ENCODE measurements at regions of chr10 and their contacts with region 1.

Region 1: DNA sequence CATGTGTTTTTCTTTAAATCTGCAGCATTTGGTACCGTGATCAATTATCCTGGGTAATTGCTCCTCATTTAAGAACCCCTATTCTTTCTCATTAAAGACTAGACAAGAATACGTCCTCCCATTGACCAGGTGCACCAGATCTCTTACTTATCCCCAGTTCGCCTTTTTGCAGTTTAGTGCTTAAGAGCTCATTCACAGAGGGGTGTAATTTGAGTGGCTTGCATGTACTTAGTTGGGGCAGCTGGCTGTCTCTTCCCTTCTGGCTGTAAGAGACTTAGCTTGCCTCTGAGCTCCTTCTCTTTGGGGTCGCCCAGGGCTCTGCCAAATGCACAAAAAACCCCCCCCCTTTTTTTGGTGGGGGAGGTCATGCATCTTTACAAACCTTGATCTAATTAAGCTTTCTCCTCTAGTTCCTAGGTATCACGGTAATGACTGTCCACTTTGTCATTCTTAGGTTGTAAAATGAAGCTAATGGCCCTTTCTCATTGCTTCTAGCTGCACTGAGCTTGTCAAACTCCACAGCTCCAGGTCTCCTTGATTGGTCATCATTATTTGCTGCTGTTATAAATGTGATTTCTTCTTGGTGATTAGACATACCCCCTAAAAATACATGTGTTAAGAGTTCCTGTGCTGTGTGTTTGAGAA is 26.3 kb downstream of the GAD2 start:
- DNase-seq: no peak
- H3K4me3 ChIP-seq: no peak overlapping the region
- H3K27ac ChIP-seq: no peak overlapping the region
- H3K4me1 ChIP-seq: no peaks in the 10 kb centered on the region
- CTCF ChIP-seq: no peak

Region 2: GRCh38 chr10:26232174-26232573 is 10.7 kb before region 1 on chr10:
- CTCF ChIA-PET with region 1: no interaction called
- POLR2A ChIA-PET with region 1: interaction called, 10 read pairs
- intact Hi-C with region 1: no loop called
- DNase-seq: no peak
- H3K4me3 ChIP-seq: no peak overlapping the region
- H3K27ac ChIP-seq: no peak overlapping the region
- H3K4me1 ChIP-seq: peaks cover 3% of the 10 kb centered on the region
- CTCF ChIP-seq: no peak

Region 3: DNA sequence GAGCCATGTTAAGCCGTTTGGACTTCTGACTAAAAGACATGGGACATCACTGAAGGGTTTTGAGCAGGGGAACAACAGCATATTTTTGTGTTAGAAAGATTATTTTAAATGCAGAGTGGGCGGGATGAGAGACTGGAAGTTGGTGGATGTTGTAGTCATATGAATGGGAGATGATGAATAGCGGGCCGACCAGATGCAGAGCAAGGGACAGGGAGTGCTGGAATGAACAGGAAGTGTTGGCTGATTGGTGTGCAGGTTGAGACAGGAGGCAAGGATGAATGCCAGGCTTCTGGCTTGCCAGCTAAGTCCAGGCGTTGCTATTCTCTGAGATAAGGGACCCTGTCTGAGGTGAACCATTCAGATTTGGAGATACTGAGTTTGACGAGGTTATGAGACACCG is 11.8 kb after region 1 on chr10:
- CTCF ChIA-PET with region 1: interaction called, 15 read pairs
- POLR2A ChIA-PET with region 1: interaction called, 5 read pairs
- intact Hi-C with region 1: no loop called
- DNase-seq: no peak
- H3K4me3 ChIP-seq: no peak overlapping the region
- H3K27ac ChIP-seq: no peak overlapping the region
- H3K4me1 ChIP-seq: no peaks in the 10 kb centered on the region
- CTCF ChIP-seq: no peak